ENCODE measurements at regions of chr3 and their contacts with region 1.

Region 1: DNA sequence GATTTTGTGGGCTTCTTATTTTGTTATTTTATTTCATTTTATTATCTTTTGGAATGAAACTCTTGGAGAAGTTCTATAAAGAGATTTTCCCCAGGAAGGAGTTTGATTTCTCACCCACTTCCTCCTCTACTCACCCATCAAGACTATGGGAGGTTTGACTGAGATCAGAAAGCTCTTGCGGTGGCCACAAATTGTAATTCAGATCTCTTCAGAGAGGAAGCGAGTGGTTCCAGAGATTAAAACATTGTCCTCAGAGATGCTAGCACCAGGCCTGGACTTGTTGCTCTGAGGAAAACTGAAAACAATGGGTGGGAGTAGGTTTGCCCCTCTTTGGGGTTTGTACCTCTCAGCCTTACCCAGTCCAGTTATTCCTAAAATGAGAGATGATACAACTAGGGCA is 8.1 kb upstream of the MUC13 start:
- DNase-seq: no peak
- H3K4me3 ChIP-seq: no peak overlapping the region
- H3K27me3 ChIP-seq: no peaks in the 10 kb centered on the region; the same call in 1 of the 2 replicates
- CTCF ChIP-seq: no peak

Region 2: GRCh38 chr3:124964387-124964786 is 21.8 kb after region 1 on chr3:
- CTCF ChIA-PET with region 1: interaction called, 4 read pairs
- POLR2A ChIA-PET with region 1: interaction called, 11 read pairs
- DNase-seq: no peak
- H3K4me3 ChIP-seq: no peak overlapping the region
- H3K27me3 ChIP-seq: no peaks in the 10 kb centered on the region
- CTCF ChIP-seq: no peak

Measured in BJ (cell line).